ENCODE measurements at regions of chr5 and their contacts with region 1.

Region 1: DNA sequence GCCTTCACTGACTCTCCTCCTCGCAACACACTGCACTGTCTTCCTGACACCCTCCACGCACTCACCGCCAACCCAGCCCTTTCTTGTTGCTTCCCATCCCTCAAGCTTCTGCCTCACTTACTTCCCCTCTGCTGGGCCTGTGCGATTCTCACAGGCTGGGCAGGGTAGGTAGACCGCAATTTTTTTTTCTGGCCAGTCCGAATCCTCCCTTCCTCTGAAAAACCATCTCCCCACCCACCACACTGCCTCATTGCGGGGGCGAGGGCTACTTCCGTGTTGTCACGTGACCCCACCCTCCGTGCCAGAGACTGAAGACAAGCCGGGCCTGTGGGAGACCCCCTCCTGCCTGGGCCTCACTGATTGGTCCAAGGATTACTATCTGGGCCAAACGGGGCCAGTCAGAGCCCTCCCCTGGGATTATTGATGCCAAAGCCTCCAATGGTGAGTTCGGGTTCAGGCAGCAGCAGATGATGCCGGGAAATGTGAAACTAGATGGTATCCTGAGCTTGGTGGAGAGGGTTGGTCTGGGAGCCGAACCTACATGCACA is 73.1 kb downstream of the STK10 start:
- DNase-seq: peak; percentile 85 to 97 (median 92)
- H3K4me3 ChIP-seq: peak overlapping the region in 1 of 3 experiments; percentile 41
- H3K4me3 Mint-ChIP-seq: peak overlapping the region; percentile 50 to 87
- H3K27ac ChIP-seq: peak overlapping the region; percentile 88 to 89
- H3K27ac Mint-ChIP-seq: peak overlapping the region; percentile 93 to 99 (median 97)
- H3K4me1 ChIP-seq: peaks cover 86 to 87% of the 10 kb centered on the region in 2 donors
- H3K4me1 Mint-ChIP-seq: peaks cover 82% of the 10 kb centered on the region
- H3K27me3 ChIP-seq: no peaks in the 10 kb centered on the region
- H3K27me3 Mint-ChIP-seq: no peaks in the 10 kb centered on the region
- CTCF ChIP-seq: no peak

Region 2: DNA sequence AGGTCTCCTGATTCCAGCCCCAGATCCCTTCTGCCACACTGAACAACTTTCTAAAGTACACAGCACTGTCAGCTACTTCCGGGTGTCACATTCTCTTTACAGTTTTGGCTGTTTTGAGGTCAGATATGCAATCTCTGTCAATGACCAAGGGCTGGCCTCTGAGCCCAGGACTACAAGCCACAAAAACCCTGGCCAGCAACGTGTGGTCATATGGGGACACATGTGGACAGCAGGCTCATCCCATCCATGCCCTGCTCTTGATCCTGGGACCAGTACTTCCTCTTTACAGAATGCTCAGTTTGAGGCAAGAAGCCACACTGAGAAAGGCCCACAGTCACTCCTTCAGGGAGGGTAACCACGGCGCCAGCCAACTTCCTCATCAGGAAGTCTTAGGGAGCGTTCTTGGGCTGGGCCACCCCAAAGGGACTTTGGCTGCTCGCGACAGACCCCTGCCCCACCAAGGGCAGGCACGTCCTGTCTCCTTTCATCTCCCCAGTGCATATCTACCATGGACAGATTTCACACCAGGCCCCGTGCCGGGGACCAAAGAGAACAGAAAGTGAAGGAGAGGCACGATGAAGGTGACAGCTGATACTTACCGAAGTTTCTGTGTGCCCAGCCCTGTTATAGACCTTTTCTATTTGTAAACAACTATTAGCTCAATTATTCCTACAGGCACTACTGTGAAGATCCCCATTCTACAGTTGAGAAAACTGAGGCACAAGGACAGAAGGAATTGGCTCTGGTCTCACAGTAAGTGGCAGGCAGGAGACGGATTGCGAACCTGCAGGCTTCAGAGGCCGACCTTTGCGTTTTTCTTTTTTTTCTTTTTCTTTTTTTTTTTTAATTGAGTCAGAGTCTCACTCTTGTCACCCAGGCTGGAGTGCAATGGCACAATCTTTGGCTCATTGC is 35.8 kb after region 1 on chr5:
- intact Hi-C with region 1: loop called in 1 of 2 experiments (anchors 2 kb)
- DNase-seq: peak; percentile 96 to 98 (median 98)
- H3K4me3 ChIP-seq: peak overlapping the region in 1 of 3 experiments; percentile 51
- H3K4me3 Mint-ChIP-seq: peak overlapping the region; percentile 74 to 84
- H3K27ac ChIP-seq: peak overlapping the region; percentile 85 to 86
- H3K27ac Mint-ChIP-seq: peak overlapping the region; percentile 97 to 99 (median 99)
- H3K4me1 ChIP-seq: peaks cover 64 to 70% of the 10 kb centered on the region in 2 donors
- H3K4me1 Mint-ChIP-seq: peaks cover 69% of the 10 kb centered on the region
- H3K27me3 ChIP-seq: no peaks in the 10 kb centered on the region
- H3K27me3 Mint-ChIP-seq: peaks cover 0 to 2% (median 2%) of the 10 kb centered on the region in 3 donors
- CTCF ChIP-seq: no peak

Region 3: GRCh38 chr5:172179361-172179989 is 64.5 kb after region 1 on chr5:
- intact Hi-C with region 1: loop called in 1 of 2 experiments (anchors 2 kb)
- DNase-seq: peak; percentile 72 to 90 (median 74)
- H3K4me3 ChIP-seq: peak overlapping the region; percentile 18 to 88 (median 20)
- H3K4me3 Mint-ChIP-seq: peak overlapping the region; percentile 80 to 87
- H3K27ac ChIP-seq: peak overlapping the region; percentile 92 to 93
- H3K27ac Mint-ChIP-seq: peak overlapping the region; percentile 96 to 98 (median 97)
- H3K4me1 ChIP-seq: peaks cover 87 to 100% of the 10 kb centered on the region in 2 donors
- H3K4me1 Mint-ChIP-seq: peaks cover 94% of the 10 kb centered on the region
- H3K27me3 ChIP-seq: no peaks in the 10 kb centered on the region
- H3K27me3 Mint-ChIP-seq: peaks cover 0 to 8% (median 0%) of the 10 kb centered on the region in 3 donors
- CTCF ChIP-seq: no peak